ENCODE measurements at regions of chr12 and their contacts with region 1.

Region 1: DNA sequence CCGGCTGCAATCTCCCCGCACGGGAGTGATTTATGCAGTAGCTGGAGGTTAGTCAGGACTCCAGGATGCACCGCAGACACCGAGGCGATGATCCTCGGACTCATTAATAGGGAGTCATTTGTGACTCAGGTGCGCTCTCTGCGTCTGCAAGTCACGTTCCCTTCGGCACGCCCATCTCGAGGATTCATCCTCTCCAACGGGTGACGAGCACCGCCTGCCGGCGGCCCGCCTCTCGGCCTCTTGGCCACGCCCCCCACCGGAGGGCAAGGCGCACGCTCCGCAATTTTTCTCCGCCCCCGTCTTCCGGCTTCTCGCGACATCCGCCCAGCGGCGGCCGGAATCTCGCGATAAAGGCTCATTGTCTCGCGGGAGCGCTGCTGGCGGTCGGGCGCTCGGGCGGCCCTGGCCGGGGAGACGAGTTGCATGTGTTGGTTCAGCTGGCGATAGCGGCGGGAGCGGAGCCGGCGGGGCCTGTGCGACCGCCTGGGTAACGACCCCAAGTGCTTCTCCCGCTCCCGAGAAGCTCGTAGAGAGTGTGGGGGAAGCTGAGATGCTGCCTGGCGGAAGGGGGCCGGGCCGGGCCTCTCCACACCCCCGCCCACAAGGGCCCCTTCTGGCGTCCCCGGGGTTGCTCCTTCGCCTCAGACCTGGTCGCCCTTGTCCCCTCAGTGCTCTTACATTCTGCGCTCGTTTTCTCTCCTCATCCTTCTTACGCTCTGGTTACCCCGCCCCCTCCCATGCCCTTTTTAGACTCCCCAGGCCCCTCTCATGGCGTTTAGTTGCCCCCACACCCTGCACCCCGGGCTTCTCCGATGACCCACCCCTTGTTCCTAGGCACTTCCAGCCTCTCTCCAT is at the start of gene DENR:
- DNase-seq: peak; percentile 97 to 100 (median 99)
- H3K4me3 ChIP-seq: peak within 1 kb of the TSS; percentile 69
- H3K27ac ChIP-seq: peak within 1 kb of the TSS; percentile 37 to 65
- H3K4me1 ChIP-seq: no peaks in the 10 kb centered on the region
- H3K27me3 ChIP-seq: no peaks in the 10 kb centered on the region
- CTCF ChIP-seq: peak; percentile 55 to 88 (median 57)
- EP300 ChIP-seq: no peak
- POLR2A ChIP-seq: peak; percentile 46
- total RNA-seq, gene DENR: 13.0 to 34.0 (median 27.7) TPM

Region 2: GRCh38 chr12:122642009-122642408 is 110.7 kb before region 1 on chr12:
- intact Hi-C with region 1: loop called in 1 of 4 experiments (anchors 5 kb)
- DNase-seq: no peak
- H3K4me3 ChIP-seq: no peak overlapping the region
- H3K27ac ChIP-seq: no peak overlapping the region
- H3K4me1 ChIP-seq: no peaks in the 10 kb centered on the region
- H3K27me3 ChIP-seq: no peaks in the 10 kb centered on the region
- CTCF ChIP-seq: no peak
- EP300 ChIP-seq: no peak
- POLR2A ChIP-seq: no peak

Measured in ovary (tissue), 10 donors.